ENCODE measurements at regions of chr15 and their contacts with region 1.

Region 1: GRCh38 chr15:77974098-77974414 is 103.5 kb downstream of the TBC1D2B start:
- DNase-seq: peak; percentile 82
- ATAC-seq: peak; percentile 68

Region 2: DNA sequence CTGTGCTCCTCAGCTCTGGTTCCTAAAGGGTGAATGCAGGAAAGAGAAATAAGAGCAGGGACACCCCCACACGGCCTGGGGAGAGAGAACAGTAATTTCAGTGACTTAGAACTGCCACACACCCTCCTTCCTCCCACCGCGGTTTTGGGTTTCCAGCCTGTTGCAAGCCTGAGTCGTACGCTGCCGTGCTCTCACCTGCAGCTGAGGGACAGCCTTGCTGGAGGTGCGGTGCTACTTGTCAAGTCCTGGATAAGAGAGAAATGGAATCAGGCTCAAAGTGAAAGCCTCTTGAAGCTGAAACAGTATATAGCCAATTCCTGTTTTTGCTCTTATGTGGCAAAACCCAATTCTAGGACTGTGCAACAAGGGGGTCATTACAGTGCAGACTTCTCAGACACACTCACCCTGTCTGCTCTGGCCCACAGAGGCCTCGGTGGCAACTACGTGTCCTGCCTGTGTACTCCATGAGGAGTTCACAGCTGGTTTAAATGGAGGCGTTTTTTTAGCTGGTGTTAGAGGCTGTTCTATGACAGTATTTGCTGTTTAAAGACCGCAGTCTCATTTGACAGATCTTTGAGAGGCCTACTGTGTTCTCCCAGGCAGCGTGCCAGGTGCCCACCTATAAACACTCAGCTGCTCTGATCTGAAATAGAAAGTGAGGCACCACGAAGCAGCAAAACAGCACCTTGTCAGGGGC is 60.6 kb after region 1 on chr15:
- intact Hi-C with region 1: no loop called
- DNase-seq: peak; percentile 55
- ATAC-seq: peak; percentile 33

Region 3: DNA sequence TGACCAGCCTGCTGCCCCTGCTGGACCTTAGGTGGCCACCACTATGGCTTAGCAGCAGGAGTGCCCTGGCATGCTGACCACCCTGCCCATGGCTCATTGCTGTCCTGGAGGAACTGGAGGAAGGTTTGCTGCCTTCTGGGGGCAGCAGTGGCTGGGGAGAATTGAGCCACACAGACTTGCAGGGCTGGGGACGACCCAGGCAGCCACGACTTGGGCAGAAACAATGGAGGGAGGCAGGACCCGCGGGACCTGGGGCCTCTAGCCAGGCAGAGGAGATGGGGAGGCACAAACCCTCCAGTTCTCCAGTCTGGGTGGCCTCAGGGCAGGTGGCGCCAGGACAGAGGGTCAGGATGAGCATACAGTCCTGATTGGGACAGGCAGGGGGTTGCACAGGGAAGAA is 804.4 kb after region 1 on chr15:
- intact Hi-C with region 1: loop called (anchors 10 kb)
- DNase-seq: no peak
- ATAC-seq: no peak